ENCODE measurements at regions of chr5 and their contacts with region 1.

Region 1: DNA sequence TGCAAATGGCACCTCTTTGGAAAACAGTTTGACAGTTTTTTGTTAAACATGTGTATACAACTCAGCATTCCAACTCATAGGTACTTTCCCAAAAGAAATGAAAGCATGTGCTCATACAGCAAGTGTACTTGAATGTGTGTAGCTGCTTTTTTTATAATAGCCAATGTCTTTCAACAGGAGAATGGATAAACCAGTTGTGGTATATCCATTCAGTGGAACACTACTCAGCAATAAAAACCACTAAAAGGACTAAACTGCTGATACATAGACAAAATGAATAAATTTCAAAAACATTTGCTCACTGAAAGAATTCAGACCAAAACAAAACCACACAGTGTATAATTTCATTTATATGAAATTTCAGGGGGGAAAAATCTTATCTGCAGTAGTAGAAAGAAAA is 267.3 kb downstream of the NR2F1-AS1 start:
- DNase-seq: no peak

Region 2: GRCh38 chr5:93328833-93329232 is 15.2 kb after region 1 on chr5:
- intact Hi-C with region 1: no loop called
- DNase-seq: no peak

Region 3: GRCh38 chr5:93342563-93343061 is 28.9 kb after region 1 on chr5:
- intact Hi-C with region 1: no loop called
- DNase-seq: no peak

Region 4: GRCh38 chr5:93382188-93382825 is 68.6 kb after region 1 on chr5:
- intact Hi-C with region 1: loop called in 1 of 2 experiments (anchors 2 kb)
- DNase-seq: no peak

Measured in posterior vena cava (tissue), 2 donors.